Kidney (tissue), 22 donors: ENCODE measurements at regions of chr10 and their contacts with region 1.

Region 1: GRCh38 chr10:115129752-115130151 is 36.6 kb downstream of the ATRNL1 start:
- DNase-seq: peak in 2 of 5 donors; percentile 58 to 62
- H3K4me3 ChIP-seq: no peak overlapping the region
- H3K27ac ChIP-seq: no peak overlapping the region
- H3K4me1 ChIP-seq: no peaks in the 10 kb centered on the region
- H3K27me3 ChIP-seq: no peaks in the 10 kb centered on the region
- CTCF ChIP-seq: peak; percentile 18

Region 2: DNA sequence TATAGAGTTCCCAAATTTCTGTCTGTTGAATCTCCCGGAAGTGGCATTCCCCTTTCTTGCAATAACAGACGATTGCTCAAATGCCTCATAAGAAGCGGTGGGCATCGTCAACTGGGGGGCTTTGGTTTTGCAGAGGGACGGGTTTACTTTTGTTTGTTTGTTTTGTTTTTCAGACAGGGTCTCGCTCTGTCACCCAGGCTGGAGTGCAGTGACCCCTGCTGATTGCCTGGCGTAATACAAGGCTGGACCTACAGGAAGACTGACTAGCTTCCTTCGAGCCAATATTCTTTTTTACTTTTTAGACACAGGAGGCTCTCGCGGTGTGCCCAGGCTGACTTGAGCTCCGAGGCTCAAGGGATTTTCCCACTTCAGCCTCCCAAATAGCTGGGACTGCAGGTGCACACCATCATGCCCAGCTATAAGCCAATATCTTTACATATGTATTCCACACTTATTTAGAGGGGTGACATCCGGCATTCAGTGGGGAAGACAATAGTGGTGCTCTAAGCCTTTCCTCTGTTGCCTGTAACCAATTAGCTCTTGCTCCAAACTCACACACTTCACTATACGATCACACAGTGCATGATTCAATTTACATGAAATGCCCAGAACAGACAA is 250.1 kb before region 1 on chr10:
- intact Hi-C with region 1: loop called (anchors 10 kb)
- DNase-seq: peak in 4 of 5 donors; percentile 37 to 62 (median 55)
- H3K4me3 ChIP-seq: peak overlapping the region in 1 of 3 donors; percentile 17
- H3K27ac ChIP-seq: no peak overlapping the region
- H3K4me1 ChIP-seq: peaks cover 0 to 4% (median 0%) of the 10 kb centered on the region in 3 donors
- H3K27me3 ChIP-seq: no peaks in the 10 kb centered on the region
- CTCF ChIP-seq: peak; percentile 48